ENCODE measurements at regions of chr4 and their contacts with region 1.

Region 1: DNA sequence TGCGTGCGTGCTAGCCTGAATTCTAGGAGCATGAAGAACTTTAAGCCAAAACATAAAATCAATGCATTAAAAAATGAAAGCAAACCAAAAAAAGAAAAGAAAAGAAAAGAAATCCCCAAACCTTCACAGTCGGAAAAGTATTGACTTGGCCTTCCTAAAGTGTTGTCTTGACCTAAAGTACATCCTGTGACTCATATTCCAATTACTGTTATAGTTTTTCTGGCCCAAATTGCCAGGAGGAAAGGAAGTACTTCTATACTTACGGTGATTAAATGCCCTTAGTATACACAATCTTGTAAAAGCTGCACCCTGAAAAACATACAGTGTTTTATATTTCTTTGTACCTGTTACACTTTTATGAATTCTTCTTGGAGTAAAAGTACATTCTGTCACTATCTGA is 512.8 kb downstream of the ANKRD50 start:
- DNase-seq: no peak
- H3K4me3 ChIP-seq: no peak overlapping the region
- H3K27ac ChIP-seq: no peak overlapping the region
- H3K4me1 ChIP-seq: no peaks in the 10 kb centered on the region
- CTCF ChIP-seq: no peak

Region 2: GRCh38 chr4:122845760-122846159 is 1354.0 kb before region 1 on chr4:
- CTCF ChIA-PET with region 1: no interaction called
- POLR2A ChIA-PET with region 1: interaction called, 10 read pairs
- intact Hi-C with region 1: no loop called
- DNase-seq: no peak
- H3K4me3 ChIP-seq: no peak overlapping the region
- H3K27ac ChIP-seq: no peak overlapping the region
- H3K4me1 ChIP-seq: no peaks in the 10 kb centered on the region
- CTCF ChIP-seq: no peak

Region 3: GRCh38 chr4:124288706-124289483 is 89.1 kb after region 1 on chr4:
- CTCF ChIA-PET with region 1: no interaction called
- POLR2A ChIA-PET with region 1: no interaction called
- intact Hi-C with region 1: no loop called
- DNase-seq: no peak
- H3K4me3 ChIP-seq: no peak overlapping the region
- H3K27ac ChIP-seq: no peak overlapping the region
- H3K4me1 ChIP-seq: no peaks in the 10 kb centered on the region
- CTCF ChIP-seq: no peak

Measured in OCI-LY7 (cell line).